Prostate gland (tissue), 2 donors: ENCODE measurements at regions of chr19 and their contacts with region 1.

Region 1: GRCh38 chr19:41859618-41860418 is at the start of gene RPS19:
- DNase-seq: peak; percentile 98
- H3K4me3 ChIP-seq: peak within 1 kb of the TSS; percentile 93 to 99
- H3K27ac ChIP-seq: peak within 1 kb of the TSS; percentile 96
- H3K4me1 ChIP-seq: peaks cover 9% of the 10 kb centered on the region
- H3K27me3 ChIP-seq: no peaks in the 10 kb centered on the region
- CTCF ChIP-seq: peak; percentile 66 to 97 (median 80)
- POLR2A ChIP-seq: peak; percentile 51
- total RNA-seq, gene RPS19: 1,179 to 1,248 TPM

Region 2: DNA sequence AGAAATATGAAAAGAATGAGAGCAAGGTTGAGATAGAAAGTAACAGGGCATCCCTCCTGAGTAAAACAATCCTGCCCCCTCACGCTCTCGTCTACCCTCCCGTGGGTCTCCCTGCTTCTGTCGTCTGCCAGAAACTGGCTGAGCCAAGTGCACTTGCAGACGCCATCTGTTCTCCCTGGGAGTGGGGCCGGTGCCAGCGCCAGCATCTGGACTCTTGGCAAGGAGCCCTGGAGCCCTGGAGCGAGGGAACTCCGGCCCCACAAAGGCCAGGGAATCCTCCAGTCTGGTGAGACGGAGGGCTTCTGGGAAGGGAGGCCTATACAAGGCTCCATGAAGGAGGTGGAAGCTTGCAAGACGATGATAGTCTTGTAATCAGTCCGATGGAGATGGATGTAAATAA is 485.8 kb before region 1 on chr19:
- intact Hi-C with region 1: no loop called
- DNase-seq: peak; percentile 47
- H3K4me3 ChIP-seq: no peak overlapping the region
- H3K27ac ChIP-seq: no peak overlapping the region
- H3K4me1 ChIP-seq: no peaks in the 10 kb centered on the region
- H3K27me3 ChIP-seq: no peaks in the 10 kb centered on the region
- CTCF ChIP-seq: no peak
- POLR2A ChIP-seq: no peak

Region 3: GRCh38 chr19:41718761-41719160 is 141.1 kb before region 1 on chr19:
- intact Hi-C with region 1: no loop called
- DNase-seq: no peak
- H3K4me3 ChIP-seq: no peak overlapping the region
- H3K27ac ChIP-seq: no peak overlapping the region
- H3K4me1 ChIP-seq: no peaks in the 10 kb centered on the region
- H3K27me3 ChIP-seq: no peaks in the 10 kb centered on the region
- CTCF ChIP-seq: no peak
- POLR2A ChIP-seq: no peak

Region 4: GRCh38 chr19:41821003-41821735 is 38.6 kb before region 1 on chr19:
- intact Hi-C with region 1: no loop called
- DNase-seq: peak; percentile 41
- H3K4me3 ChIP-seq: no peak overlapping the region
- H3K27ac ChIP-seq: no peak overlapping the region
- H3K4me1 ChIP-seq: no peaks in the 10 kb centered on the region
- H3K27me3 ChIP-seq: no peaks in the 10 kb centered on the region
- CTCF ChIP-seq: peak; percentile 29 to 75 (median 56)
- POLR2A ChIP-seq: no peak

Region 5: GRCh38 chr19:41883821-41884733 is 24.3 kb after region 1 on chr19:
- intact Hi-C with region 1: loop called (anchors 1 kb)
- DNase-seq: peak; percentile 95
- H3K4me3 ChIP-seq: peak overlapping the region; percentile 78 to 92
- H3K27ac ChIP-seq: peak overlapping the region; percentile 75 to 83
- H3K4me1 ChIP-seq: peaks cover 4% of the 10 kb centered on the region
- H3K27me3 ChIP-seq: no peaks in the 10 kb centered on the region
- CTCF ChIP-seq: peak in 3 of 4 experiments; percentile 7 to 55 (median 44)
- POLR2A ChIP-seq: peak; percentile 60

Region 6: DNA sequence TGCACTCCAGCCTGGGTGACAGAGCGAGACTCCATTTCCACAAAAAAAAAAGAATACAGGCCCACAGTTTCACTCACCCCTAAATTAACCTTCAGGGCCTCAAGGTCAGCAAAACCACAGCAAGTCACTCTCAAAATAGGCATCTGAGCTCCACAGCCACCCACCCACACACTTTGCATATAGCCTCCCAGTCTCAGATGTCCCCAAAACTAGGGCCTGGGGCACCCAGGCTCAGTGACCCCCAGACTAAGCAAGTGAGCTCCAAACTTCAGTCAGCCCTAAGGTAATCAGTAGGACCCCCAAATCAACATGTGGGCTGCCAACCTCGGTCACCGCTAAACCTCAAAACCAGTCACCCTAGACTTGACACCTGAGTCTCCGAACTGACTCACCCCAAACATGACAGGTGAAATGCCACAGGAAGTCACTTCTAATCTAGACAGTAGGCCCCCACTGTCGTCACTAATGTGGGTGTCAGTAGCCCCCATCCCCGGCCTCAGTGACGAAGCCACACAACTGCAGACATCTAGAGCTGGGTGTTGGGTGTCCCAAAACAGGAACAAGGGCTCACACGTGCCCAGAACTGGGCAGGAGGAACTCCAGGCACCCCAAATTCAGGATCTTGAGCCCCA is 85.4 kb after region 1 on chr19:
- intact Hi-C with region 1: no loop called
- DNase-seq: peak; percentile 17
- H3K4me3 ChIP-seq: no peak overlapping the region
- H3K27ac ChIP-seq: no peak overlapping the region
- H3K4me1 ChIP-seq: peaks cover 6% of the 10 kb centered on the region
- H3K27me3 ChIP-seq: no peaks in the 10 kb centered on the region
- CTCF ChIP-seq: no peak
- POLR2A ChIP-seq: no peak

Region 7: GRCh38 chr19:41959056-41960053 is 99.5 kb after region 1 on chr19 and contains the start of gene RABAC1:
- intact Hi-C with region 1: loop called (anchors 5 kb)
- DNase-seq: peak; percentile 88
- H3K4me3 ChIP-seq: peak within 1 kb of the TSS; percentile 58 to 70
- H3K27ac ChIP-seq: peak within 1 kb of the TSS; percentile 82 to 90
- H3K4me1 ChIP-seq: peaks cover 4% of the 10 kb centered on the region
- H3K27me3 ChIP-seq: no peaks in the 10 kb centered on the region
- CTCF ChIP-seq: peak in 1 of 4 experiments; percentile 16
- POLR2A ChIP-seq: peak; percentile 58
- total RNA-seq, gene RABAC1: 153 to 168 TPM